Left cardiac atrium (tissue), 4 donors: ENCODE measurements at regions of chr2 and their contacts with region 1.

Region 1: GRCh38 chr2:219057709-219058540 is 2.8 kb downstream of the IHH start:
- DNase-seq: peak; percentile 76
- ATAC-seq: peak; percentile 91 to 93

Region 2: DNA sequence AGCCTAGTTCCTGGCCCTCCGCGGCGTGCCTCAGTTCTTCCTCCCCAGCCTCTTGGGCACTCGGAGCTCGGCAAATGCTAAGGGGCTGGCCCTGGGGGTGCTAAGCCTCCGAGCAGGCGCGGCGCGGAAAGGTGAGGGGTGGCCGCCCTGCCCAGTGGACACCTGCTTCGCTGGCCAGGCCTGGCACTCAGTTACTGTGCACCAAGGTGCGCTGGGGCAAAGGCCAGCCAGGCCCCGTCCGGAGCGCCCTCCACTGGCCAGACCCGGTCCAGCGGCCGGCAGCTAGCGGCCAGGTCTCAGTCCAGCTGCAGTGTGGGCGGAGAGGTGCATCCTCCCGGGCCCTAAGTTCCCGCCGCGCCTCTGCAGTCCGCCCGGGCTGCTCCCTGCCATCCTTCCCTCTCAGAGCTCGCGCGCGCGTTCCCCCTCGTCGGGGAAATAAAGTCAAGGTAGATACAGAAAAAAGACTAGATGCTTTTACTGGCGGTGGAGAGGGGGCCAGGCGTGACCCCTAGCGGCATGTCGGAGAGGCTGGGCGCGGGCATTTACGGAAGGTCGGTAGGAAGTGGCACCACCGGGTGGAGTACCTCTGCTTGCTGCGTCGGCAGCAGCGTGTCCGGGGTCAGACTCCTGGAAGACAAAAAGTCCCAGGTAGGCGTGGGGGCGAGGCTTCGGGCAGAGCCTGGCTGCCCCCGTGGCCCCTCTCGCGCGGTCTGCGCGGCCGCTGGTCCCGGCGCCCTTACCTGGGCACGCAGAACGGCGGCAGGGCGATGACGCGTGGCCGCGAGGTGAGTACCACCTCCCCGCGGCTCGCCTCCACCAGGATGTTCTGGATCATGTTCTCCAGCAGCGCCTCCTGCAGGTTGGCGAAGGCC is 55.3 kb before region 1 on chr2:
- intact Hi-C with region 1: no loop called
- DNase-seq: peak; percentile 49
- ATAC-seq: peak in 1 of 2 donors; percentile 16

Region 3: GRCh38 chr2:219119422-219120043 is 61.6 kb after region 1 on chr2:
- intact Hi-C with region 1: loop called (anchors 1 to 5 kb)
- DNase-seq: peak; percentile 71
- ATAC-seq: peak; percentile 47 to 71

Region 4: DNA sequence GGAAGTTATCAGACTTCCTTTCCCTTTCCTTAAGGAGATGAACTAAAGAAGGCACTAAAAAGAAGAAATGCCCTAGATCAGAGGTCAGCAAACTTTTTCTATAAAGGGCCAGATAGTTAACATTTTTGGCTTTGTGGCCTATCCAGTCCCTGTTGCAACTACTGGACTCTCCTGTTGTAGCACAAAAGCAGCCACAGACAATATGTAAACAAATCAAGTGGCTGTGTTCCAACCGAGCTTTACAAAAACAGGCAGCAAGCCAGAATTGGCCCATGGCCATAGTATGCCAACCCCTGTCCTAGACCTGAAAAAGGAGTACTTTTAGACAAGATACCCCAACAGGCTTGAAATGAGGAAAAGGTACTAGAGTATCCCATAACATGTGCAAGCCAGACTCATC is 91.7 kb after region 1 on chr2:
- intact Hi-C with region 1: loop called (anchors 5 kb)
- DNase-seq: no peak
- ATAC-seq: no peak

Region 5: DNA sequence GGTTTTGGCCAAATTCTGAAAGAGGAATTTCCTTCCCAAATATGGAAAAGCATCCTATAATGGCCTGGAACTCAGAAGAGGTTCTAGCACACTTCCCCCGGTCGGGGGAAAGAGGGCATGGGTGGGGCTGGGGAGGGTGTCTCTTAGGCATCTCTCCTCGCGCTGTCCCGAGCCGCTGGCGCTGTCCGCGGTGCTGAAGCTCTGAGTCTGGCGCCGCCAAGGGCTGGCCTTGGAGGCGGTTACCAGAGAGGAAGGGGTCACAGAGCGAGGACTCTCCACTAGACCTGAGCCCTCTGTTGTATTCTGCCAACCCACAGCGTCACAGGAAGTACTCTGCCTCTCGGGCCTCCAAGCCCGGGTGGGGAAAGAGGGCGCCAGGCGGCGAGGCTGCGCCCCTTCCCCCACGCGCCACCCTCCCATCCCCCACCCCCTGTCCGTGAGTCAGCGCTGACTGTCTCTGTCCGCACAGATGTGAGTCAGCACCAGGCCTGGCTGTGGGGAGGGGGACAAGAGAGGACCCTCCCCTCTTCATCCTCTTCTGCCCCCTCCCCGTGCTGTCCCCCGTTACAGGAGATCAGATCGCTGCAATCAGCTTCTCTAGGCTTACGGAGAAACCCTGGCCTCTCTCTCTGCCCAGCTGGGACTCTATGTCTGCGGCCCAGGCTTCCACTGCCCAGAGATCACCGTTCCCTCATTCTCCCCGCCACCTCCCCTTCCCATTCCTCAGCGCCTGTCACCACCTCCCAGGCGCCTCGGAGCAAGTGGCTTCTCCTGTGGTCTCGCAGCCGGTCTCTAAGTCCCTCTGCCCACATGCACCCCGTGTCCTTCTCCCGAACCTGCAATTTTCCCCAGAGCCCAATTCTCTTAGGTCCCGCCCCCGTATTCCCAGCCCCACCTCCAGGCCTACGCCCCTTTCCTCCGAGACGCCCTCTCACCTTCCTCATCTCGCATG is 250.5 kb after region 1 on chr2:
- intact Hi-C with region 1: loop called (anchors 10 kb)
- DNase-seq: peak; percentile 67
- ATAC-seq: peak; percentile 68 to 89